GM23248 (cell line): ENCODE measurements at regions of chr1 and their contacts with region 1.

Region 1: DNA sequence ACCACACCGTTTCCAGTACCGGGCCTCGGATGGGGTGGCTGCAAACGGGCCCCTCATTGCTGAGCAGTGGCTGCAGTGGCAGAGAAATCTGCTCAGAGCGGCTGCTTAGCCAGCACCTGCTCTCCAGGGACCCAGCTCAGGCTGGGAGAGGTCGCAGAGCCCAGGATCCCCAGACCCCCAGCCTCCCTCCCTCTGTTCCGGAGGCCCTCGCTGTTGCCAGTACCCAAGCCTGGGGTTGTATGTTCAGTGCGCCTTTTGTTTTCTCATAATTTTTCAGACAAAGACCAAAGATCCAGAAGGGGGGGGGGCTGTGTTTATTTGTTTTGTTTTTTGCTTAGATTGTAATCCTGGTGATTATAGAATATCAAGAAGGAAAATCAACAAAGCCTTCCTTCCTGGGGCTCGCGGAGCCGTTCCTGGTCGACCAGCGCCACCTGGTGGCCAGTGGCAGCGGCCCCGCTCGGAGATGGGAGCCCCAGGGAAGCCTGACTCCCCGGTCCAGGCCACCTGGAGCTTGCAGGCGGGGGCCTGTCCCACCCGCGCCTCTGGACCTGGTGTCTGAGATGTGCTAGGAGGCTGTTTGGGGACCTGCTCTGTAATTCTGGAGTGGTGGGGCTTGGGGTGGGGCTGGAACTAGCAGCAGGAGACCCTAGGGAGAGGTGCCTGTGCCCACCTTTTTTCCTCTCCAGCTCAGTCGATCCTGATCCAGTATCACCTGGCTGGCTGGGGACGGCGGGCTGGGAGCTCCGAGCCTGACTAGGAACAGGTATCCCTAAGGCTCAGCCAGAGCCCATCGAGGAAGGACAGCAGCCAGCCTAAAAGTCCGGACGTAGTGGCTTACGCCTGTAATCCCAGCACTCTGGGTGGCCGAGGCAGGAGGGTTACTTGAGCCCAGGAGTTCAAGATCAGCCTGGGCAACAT is 123.9 kb upstream of the VAMP3 start:
- DNase-seq: peak; percentile 70
- H3K4me3 ChIP-seq: no peak overlapping the region
- H3K27ac ChIP-seq: no peak overlapping the region
- H3K4me1 ChIP-seq: peaks cover 8% of the 10 kb centered on the region
- H3K27me3 ChIP-seq: peaks cover 21% of the 10 kb centered on the region

Region 2: DNA sequence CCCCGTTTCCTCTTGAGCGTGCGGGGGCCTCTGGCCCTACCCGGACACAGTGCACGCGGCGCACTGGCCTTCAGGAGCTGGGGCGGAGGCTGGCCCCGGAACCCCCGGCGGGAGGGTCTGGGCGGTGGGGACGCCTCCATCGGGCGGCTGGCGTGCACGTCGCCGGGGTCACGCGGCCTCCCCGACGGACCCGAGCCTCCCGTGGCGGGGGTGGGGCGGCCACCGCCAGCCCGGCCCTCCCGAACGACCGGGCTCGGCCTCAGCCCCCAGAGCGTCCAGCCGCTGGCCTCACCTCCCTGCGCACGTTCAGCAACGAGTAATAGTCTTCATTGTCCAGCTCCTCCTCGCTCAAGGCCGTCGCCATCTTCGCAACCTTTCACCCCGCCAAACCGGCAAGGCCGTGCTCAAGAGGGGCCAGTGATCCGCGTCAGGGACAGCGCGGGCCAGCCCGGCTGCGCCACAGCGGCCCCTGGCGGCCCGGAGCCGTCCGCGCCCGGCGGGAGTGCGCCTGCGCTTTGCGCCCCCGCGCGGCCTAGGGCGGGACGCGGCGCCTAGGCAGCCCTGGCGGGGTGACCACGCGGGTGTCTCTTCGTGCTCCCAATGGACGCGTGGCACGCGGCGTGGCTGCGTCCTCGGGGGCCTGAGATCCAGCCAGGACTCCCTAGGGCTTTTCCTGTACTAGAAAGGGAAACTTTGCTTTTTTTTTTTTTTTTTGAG is 945.6 kb before region 1 on chr1 and contains the start of gene DNAJC11:
- in situ Hi-C with region 1: loop called (anchors 25 kb)
- DNase-seq: peak; percentile 95
- H3K4me3 ChIP-seq: peak within 1 kb of the TSS; percentile 82
- H3K27ac ChIP-seq: peak within 1 kb of the TSS; percentile 66
- H3K4me1 ChIP-seq: peaks cover 7% of the 10 kb centered on the region
- H3K27me3 ChIP-seq: no peaks in the 10 kb centered on the region
- total RNA-seq, gene DNAJC11: 23.4 and 28.9 TPM in 2 replicates

Region 3: DNA sequence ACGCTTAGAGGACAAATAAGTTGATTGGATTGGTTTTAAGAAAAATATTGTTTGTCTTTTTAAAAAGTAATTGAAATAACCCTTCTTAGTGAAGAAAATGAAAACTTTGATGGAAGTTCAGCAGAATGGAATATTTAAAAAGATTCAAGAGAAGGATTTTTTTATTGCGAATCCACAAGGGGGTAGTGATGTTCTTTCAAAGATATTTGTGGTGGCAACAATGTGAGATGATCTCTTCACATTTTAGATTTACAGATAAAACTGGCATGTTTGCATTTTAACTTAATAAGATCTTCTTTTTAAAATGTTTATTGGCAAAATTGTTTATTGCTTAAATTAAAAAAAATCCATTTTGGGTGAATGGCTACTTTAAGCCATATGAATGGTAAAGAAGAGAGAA is 853.1 kb before region 1 on chr1:
- in situ Hi-C with region 1: loop called (anchors 10 kb)
- DNase-seq: peak; percentile 62
- H3K4me3 ChIP-seq: no peak overlapping the region
- H3K27ac ChIP-seq: no peak overlapping the region
- H3K4me1 ChIP-seq: peaks cover 16% of the 10 kb centered on the region
- H3K27me3 ChIP-seq: no peaks in the 10 kb centered on the region

Region 4: GRCh38 chr1:6889875-6890480 is 757.3 kb before region 1 on chr1:
- in situ Hi-C with region 1: loop called (anchors 10 kb)
- DNase-seq: peak; percentile 82
- H3K4me3 ChIP-seq: no peak overlapping the region
- H3K27ac ChIP-seq: no peak overlapping the region
- H3K4me1 ChIP-seq: 0 out of 2 replicates have a peak, but pooled peaks cover 7% of the 10 kb centered on the region
- H3K27me3 ChIP-seq: no peaks in the 10 kb centered on the region

Region 5: GRCh38 chr1:7042322-7043190 is 604.7 kb before region 1 on chr1:
- in situ Hi-C with region 1: loop called (anchors 10 kb)
- DNase-seq: peak; percentile 51
- H3K4me3 ChIP-seq: no peak overlapping the region
- H3K27ac ChIP-seq: no peak overlapping the region
- H3K4me1 ChIP-seq: no peaks in the 10 kb centered on the region
- H3K27me3 ChIP-seq: peaks cover 8% of the 10 kb centered on the region; the same call in 1 of the 2 replicates

Region 6: GRCh38 chr1:7224644-7225043 is 422.6 kb before region 1 on chr1:
- in situ Hi-C with region 1: loop called (anchors 10 kb)
- DNase-seq: no peak
- H3K4me3 ChIP-seq: no peak overlapping the region
- H3K27ac ChIP-seq: no peak overlapping the region
- H3K4me1 ChIP-seq: peaks cover 19% of the 10 kb centered on the region
- H3K27me3 ChIP-seq: no peaks in the 10 kb centered on the region

Region 7: DNA sequence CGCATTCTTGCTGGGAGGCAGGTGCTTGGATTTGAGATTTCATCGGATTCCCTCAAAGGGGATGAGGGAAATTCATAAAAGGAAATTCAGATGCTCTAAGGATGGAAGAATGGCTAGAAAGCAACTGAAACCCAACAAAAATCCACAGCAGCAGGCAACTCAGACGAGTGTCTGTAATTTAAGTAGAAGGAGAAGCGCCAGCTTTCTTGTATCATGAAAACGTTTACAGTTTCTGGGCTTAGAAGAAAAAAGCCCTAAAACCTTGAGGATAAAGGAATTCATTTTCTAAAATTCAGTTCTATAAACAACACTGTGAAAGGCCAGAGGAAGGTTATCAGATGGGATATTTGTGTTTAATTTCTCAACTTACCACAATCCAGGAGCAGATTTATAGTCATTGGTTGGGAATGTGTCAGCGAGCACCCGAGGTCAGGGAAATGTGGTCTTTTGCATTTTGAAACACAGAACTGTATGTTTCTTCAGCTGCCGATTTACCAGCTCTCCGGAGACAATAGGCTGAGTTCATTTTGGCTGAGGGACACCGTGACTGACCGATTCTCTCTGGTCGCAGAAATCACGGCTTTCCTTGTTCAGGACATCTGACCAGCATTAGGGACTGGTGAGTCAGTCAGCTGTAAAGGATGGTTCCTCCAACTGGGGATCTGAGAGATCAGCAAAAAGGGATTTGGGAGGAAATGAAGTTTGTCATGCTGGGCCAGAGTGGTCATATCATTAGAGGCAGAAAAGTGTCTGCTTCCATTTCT is 490.4 kb after region 1 on chr1:
- in situ Hi-C with region 1: no loop called
- DNase-seq: peak; percentile 86
- H3K4me3 ChIP-seq: peak overlapping the region; percentile 49
- H3K27ac ChIP-seq: peak overlapping the region; percentile 68
- H3K4me1 ChIP-seq: peaks cover 47% of the 10 kb centered on the region
- H3K27me3 ChIP-seq: no peaks in the 10 kb centered on the region

Region 8: DNA sequence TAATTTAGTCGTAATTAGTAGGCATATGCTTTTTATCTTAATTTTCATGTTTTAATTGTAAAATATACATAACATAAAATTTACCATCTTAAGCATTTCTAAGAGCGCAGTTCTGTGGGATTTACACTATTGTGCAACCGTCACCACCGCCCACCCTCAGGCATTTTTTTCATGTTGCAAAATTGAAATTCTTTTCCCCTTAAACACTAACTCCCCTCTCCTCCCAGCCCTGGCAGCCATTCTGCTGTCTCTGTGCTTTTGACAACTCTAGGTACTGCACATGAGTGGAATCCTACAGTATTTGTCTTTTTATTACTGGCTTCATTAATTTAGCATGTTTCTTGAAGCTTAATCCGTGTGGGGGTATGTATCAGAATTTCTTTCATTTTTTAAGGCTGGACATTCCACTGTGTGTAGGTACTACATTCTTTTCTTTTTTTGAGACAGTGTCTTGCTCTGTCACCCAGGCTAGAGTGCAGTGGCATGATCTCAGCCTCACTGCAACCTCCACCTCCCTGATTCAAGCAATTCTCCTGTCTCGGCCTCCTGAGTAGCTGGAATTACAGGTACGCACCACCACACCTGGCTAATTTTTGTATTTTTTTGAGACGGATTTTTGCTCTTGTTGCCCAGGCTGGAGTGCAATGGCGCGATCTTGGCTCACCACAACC is 2012.2 kb after region 1 on chr1:
- in situ Hi-C with region 1: no loop called
- DNase-seq: peak; percentile 90
- H3K4me3 ChIP-seq: no peak overlapping the region
- H3K27ac ChIP-seq: peak overlapping the region; percentile 2; the same call in 1 of the 2 replicates
- H3K4me1 ChIP-seq: peaks cover 15% of the 10 kb centered on the region
- H3K27me3 ChIP-seq: no peaks in the 10 kb centered on the region